Ovary (tissue), 10 donors: ENCODE measurements at regions of chr5 and their contacts with region 1.

Region 1: GRCh38 chr5:169183576-169183975 is 117.4 kb downstream of the SLIT3 start:
- DNase-seq: no peak
- H3K4me3 ChIP-seq: no peak overlapping the region
- H3K27ac ChIP-seq: no peak overlapping the region
- H3K4me1 ChIP-seq: no peaks in the 10 kb centered on the region
- H3K27me3 ChIP-seq: no peaks in the 10 kb centered on the region
- CTCF ChIP-seq: no peak
- EP300 ChIP-seq: no peak
- POLR2A ChIP-seq: no peak

Region 2: DNA sequence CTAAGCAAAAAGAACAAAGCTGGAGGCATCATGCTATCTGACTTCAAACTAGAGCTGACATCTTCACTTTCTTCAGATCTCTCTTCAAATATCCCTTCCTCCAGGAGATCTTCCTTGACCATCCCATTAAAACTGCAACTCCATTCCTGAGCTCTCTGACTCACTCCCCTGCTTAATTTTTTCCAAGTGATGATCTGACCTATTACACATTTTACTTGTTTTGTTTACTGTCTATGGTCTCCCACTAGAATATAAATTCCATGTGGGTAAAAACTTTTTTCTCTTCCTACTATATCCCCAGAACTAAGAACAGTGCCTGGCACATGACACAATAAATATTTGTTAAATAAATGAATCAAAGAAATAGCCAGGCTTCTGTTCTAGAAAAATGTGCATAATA is 29.9 kb after region 1 on chr5:
- intact Hi-C with region 1: no loop called
- DNase-seq: no peak
- H3K4me3 ChIP-seq: no peak overlapping the region
- H3K27ac ChIP-seq: no peak overlapping the region
- H3K4me1 ChIP-seq: no peaks in the 10 kb centered on the region
- H3K27me3 ChIP-seq: no peaks in the 10 kb centered on the region
- CTCF ChIP-seq: no peak
- EP300 ChIP-seq: no peak
- POLR2A ChIP-seq: no peak

Region 3: DNA sequence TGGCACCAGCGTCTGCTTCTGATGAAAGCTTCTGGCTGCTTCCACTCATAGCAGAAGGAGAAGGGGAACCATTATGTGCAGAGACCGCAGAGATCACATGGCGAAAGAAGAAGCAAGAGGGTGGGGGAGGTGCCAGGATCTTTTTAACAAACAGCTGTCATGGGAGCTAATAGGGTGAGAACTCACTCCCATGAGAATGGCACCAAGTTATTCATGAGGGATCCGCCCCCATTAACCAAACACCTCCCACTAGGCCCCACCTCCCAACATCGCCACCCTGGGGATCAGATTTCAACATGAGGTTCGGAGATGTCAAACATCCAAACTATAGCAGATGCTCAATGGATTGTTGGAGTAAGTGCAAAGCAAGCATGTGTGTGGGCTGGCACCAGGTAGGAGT is 243.2 kb after region 1 on chr5:
- intact Hi-C with region 1: no loop called
- DNase-seq: no peak
- H3K4me3 ChIP-seq: no peak overlapping the region
- H3K27ac ChIP-seq: no peak overlapping the region
- H3K4me1 ChIP-seq: no peaks in the 10 kb centered on the region
- H3K27me3 ChIP-seq: no peaks in the 10 kb centered on the region
- CTCF ChIP-seq: no peak
- EP300 ChIP-seq: no peak
- POLR2A ChIP-seq: no peak

Region 4: GRCh38 chr5:170315154-170315553 is 1131.6 kb after region 1 on chr5:
- intact Hi-C with region 1: loop called in 1 of 4 experiments (anchors 5 kb)
- DNase-seq: peak; percentile 68 to 86 (median 80)
- H3K4me3 ChIP-seq: no peak overlapping the region
- H3K27ac ChIP-seq: peak overlapping the region; percentile 52 to 80
- H3K4me1 ChIP-seq: peaks cover 11% of the 10 kb centered on the region
- H3K27me3 ChIP-seq: no peaks in the 10 kb centered on the region
- CTCF ChIP-seq: no peak
- EP300 ChIP-seq: peak; percentile 67
- POLR2A ChIP-seq: no peak